ENCODE measurements at regions of chr4 and their contacts with region 1.

Region 1: DNA sequence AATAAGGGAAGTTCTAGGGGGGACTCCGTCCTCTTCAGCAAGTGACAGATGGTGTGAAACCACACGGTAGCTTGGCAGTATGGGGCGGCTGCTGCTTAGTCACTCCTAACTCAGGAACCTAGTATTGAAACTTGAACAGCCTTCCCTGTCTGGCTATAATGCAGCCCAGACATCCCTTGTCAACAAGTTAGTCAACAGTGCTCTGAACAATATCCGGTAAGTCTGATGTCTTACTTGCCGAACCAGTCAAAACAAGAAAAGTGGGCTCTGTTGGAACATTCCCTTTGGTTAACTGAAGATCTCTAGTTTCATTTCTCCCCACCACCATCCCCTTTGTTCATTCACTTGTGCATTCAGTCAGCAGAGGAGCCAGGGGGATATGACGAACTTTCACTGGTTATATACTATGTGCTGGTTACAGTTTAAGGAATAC is 18.7 kb upstream of the CXCL13 start:
- DNase-seq: peak; percentile 89
- H3K4me3 Mint-ChIP-seq: peak overlapping the region; percentile 73
- H3K27ac Mint-ChIP-seq: peak overlapping the region; percentile 92
- H3K4me1 Mint-ChIP-seq: peaks cover 56% of the 10 kb centered on the region
- H3K27me3 Mint-ChIP-seq: no peaks in the 10 kb centered on the region

Region 2: GRCh38 chr4:76301068-76301774 is 1285.7 kb before region 1 on chr4:
- intact Hi-C with region 1: loop called (anchors 5 kb)
- DNase-seq: peak; percentile 82
- H3K4me3 Mint-ChIP-seq: no peak overlapping the region
- H3K27ac Mint-ChIP-seq: peak overlapping the region; percentile 66
- H3K4me1 Mint-ChIP-seq: peaks cover 39% of the 10 kb centered on the region
- H3K27me3 Mint-ChIP-seq: peaks cover 9% of the 10 kb centered on the region

Region 3: DNA sequence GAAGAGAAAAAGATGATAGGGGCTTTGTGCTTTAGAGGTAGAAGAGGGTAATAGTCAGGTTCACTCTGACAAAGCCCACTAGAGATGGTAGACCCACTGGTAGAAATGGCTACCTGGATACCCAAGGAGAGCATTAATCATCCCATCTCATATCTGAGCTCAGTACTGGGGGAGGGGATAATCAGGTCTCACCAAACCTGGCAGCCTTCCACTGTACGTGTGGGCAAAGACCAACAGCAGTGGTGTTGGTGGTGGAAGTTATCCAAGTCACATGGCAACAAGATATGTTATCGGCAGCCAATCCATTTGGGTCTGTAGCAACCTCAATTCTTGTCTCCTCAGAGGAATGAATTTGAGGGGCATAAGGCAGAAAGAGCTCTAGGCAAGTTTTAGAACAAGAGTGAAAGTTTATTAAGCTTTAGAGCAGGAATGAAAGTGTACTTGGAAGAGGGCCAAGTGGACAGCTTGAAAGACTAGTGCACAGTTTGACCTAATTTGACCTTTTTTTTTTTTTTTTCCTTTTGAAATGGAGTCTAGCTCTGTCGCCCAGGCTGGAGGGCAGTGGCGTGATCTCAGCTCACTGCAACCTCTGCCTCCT is 48.3 kb before region 1 on chr4:
- intact Hi-C with region 1: loop called (anchors 1 kb)
- DNase-seq: no peak
- H3K4me3 Mint-ChIP-seq: peak overlapping the region; percentile 43
- H3K27ac Mint-ChIP-seq: peak overlapping the region; percentile 82
- H3K4me1 Mint-ChIP-seq: peaks cover 28% of the 10 kb centered on the region
- H3K27me3 Mint-ChIP-seq: peaks cover 5% of the 10 kb centered on the region

Region 4: GRCh38 chr4:77618383-77619122 is 31.6 kb after region 1 on chr4:
- intact Hi-C with region 1: loop called (anchors 1 kb)
- DNase-seq: peak; percentile 89
- H3K4me3 Mint-ChIP-seq: no peak overlapping the region
- H3K27ac Mint-ChIP-seq: peak overlapping the region; percentile 39
- H3K4me1 Mint-ChIP-seq: peaks cover 17% of the 10 kb centered on the region
- H3K27me3 Mint-ChIP-seq: peaks cover 18% of the 10 kb centered on the region

Region 5: DNA sequence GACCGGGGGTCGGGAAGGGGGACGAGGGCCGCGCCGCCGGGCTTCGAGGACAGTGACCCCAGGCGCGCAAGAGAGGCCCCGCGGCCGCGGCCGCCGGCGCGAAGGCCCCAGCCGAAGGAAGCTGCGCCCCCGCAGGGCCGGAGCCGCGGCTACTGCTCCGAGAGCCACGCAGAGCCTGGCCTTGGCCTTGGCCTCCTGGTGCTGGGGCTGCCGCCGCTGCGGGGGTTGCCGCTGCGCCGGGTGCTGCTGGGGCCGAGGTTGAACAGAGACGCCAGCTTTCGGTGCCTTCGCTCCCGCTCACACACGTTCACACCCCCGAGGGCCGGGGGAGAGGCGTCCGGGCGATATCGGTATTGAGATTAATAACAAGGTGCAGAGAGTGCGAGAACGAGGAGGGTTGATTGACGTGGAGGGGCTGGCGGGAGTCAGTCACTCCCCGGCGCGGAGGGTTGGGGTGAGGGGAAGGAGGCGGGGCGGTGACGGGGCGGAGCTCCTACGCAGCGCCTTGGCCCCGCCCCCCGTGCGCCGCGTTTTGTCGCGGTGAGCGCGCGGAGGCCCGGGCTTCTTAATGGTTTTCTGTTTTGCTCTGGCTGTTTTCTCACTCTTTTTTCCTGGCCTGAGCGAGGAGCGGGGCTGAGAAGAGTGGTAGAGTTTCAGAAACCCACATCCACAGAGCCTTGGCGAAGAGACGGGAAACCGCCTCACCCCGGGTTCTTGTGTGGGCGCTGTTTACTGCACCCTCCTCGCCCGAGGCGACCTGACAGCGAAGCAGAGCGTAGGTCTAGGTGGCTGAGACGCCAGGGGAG is 233.1 kb after region 1 on chr4:
- intact Hi-C with region 1: loop called (anchors 2 kb)
- DNase-seq: peak; percentile 98
- H3K4me3 Mint-ChIP-seq: peak overlapping the region; percentile 97
- H3K27ac Mint-ChIP-seq: peak overlapping the region; percentile 100
- H3K4me1 Mint-ChIP-seq: peaks cover 38% of the 10 kb centered on the region
- H3K27me3 Mint-ChIP-seq: peaks cover 1% of the 10 kb centered on the region

Region 6: DNA sequence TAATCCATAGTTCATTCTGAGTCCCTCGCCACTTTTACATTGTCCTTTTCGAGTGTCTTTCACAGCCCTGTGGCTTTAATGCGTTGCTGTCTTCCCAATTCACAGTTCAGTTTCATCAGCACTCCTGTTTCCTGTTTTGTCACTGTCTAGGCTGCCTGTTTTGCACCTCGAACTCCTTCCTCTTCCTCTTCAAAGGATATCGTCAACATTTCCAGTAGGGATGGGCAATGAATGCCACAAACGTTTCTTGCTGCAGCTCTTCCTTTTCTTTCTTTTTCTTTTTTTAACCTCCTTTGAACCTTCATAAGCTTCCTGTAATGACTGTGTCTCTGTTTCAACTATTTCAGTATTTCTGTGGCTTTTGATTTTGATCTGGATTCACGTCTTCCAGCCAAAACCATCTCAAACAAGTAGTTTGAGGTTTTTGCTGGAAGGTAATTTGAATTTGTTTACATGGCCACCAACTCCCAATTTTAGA is 1070.0 kb after region 1 on chr4:
- intact Hi-C with region 1: loop called (anchors 5 kb)
- DNase-seq: peak; percentile 80
- H3K4me3 Mint-ChIP-seq: peak overlapping the region; percentile 61
- H3K27ac Mint-ChIP-seq: peak overlapping the region; percentile 65
- H3K4me1 Mint-ChIP-seq: peaks cover 38% of the 10 kb centered on the region
- H3K27me3 Mint-ChIP-seq: no peaks in the 10 kb centered on the region

Measured in activated CD4-positive, alpha-beta T cell treated with anti-CD3 and anti-CD28 coated beads, Interleukin-2, amount 10 ng/mL, durations not matched to agents 24 days and 14 days (primary cell).